Dorsolateral prefrontal cortex (tissue), 120 donors: ENCODE measurements at regions of chr3 and their contacts with region 1.

Region 1: GRCh38 chr3:160754855-160755747 is 930 bp upstream of the PPM1L start:
- DNase-seq: peak; percentile 78 to 96 (median 93)
- H3K4me3 ChIP-seq: peak overlapping the region; percentile 69 to 98 (median 85)
- H3K27ac ChIP-seq: peak overlapping the region; percentile 76 to 99 (median 96)
- H3K27me3 ChIP-seq: no peaks in the 10 kb centered on the region
- CTCF ChIP-seq: peak in 17 of 56 donors; percentile 0 to 30 (median 11)

Region 2: GRCh38 chr3:160450846-160451245 is 304.3 kb before region 1 on chr3:
- intact Hi-C with region 1: no loop called
- DNase-seq: no peak
- H3K4me3 ChIP-seq: no peak overlapping the region
- H3K27ac ChIP-seq: peak overlapping the region in 28 of 59 donors; percentile 8 to 93 (median 88)
- H3K27me3 ChIP-seq: peaks cover 0 to 47% (median 24%) of the 10 kb centered on the region in 45 donors
- CTCF ChIP-seq: no peak

Region 3: GRCh38 chr3:160565442-160566403 is 189.4 kb before region 1 on chr3 and contains the start of gene KPNA4:
- intact Hi-C with region 1: loop called (anchors 2 kb)
- DNase-seq: peak; percentile 92 to 98 (median 96)
- H3K4me3 ChIP-seq: peak within 1 kb of the TSS; percentile 68 to 96 (median 85)
- H3K27ac ChIP-seq: peak within 1 kb of the TSS; percentile 66 to 98 (median 90)
- H3K27me3 ChIP-seq: no peaks in the 10 kb centered on the region
- CTCF ChIP-seq: peak in 14 of 56 donors; percentile 3 to 38 (median 20)
- total RNA-seq, gene KPNA4: 39.4 to 90.3 (median 59.5) TPM

Region 4: DNA sequence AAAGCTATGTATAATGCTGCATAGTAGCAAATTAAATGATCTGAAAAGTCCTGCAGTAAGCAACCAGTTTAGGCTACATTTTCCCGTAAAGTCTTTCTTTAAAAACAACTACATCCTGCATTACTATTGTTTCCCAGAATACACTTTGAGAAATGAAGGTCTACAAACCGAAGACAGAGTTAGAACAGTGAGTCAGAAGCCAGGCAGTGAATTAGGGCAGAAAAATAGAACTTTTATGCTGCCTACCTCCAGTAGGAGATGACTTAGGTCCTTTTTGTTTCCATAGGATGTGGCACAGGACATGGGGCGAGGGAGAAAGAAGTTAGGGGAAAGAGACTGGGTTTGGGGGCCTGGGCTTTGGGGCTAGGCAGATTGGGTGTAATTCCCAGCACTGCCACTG is 128.3 kb after region 1 on chr3:
- intact Hi-C with region 1: loop called in 1 of 2 experiments (anchors 5 kb)
- DNase-seq: no peak
- H3K4me3 ChIP-seq: no peak overlapping the region
- H3K27ac ChIP-seq: peak overlapping the region in 1 of 59 donors; percentile 21
- H3K27me3 ChIP-seq: no peaks in the 10 kb centered on the region
- CTCF ChIP-seq: peak in 1 of 56 donors; percentile 9

Region 5: GRCh38 chr3:160929595-160929994 is 174.5 kb after region 1 on chr3:
- intact Hi-C with region 1: loop called in 1 of 2 experiments (anchors 5 kb)
- DNase-seq: peak in 4 of 10 donors; percentile 36 to 47 (median 46)
- H3K4me3 ChIP-seq: no peak overlapping the region
- H3K27ac ChIP-seq: no peak overlapping the region
- H3K27me3 ChIP-seq: no peaks in the 10 kb centered on the region
- CTCF ChIP-seq: peak in 33 of 56 donors; percentile 7 to 45 (median 28)

Region 6: DNA sequence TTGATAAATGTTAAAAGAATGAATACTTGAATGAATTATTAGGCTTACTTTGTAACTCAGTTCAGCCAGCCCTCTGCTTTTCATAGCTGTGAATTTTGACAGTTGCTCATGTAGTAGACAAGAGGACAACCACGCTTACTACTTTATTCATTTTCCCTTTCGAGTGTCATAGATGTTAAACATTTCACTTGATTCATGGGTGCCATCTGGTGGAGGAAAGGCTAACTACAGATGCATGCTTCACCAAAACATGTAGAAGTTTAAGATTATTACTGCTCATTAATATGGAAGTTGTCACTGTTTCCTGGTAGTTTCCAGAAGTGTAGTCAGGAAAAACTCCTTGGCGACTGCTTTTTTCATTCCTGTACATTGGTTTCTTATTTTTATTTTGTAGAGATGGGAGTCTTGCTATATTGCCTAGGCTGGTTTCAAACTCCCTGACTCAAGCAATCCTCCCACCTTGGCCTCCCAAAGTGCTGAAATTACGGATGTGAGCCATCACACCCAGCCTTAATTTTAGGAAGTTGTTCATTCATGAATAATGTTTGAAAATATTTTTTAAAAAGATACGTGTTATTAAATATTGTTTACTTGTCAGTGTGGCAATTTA is 186.9 kb after region 1 on chr3:
- intact Hi-C with region 1: loop called (anchors 5 kb)
- DNase-seq: peak in 6 of 10 donors; percentile 37 to 88 (median 68)
- H3K4me3 ChIP-seq: peak overlapping the region in 3 of 59 donors; percentile 1 to 25 (median 2)
- H3K27ac ChIP-seq: no peak overlapping the region
- H3K27me3 ChIP-seq: no peaks in the 10 kb centered on the region
- CTCF ChIP-seq: peak; percentile 14 to 99 (median 94)

Region 7: GRCh38 chr3:161117646-161118045 is 362.5 kb after region 1 on chr3:
- intact Hi-C with region 1: no loop called
- DNase-seq: no peak
- H3K4me3 ChIP-seq: no peak overlapping the region
- H3K27ac ChIP-seq: no peak overlapping the region
- H3K27me3 ChIP-seq: no peaks in the 10 kb centered on the region
- CTCF ChIP-seq: no peak

Region 8: DNA sequence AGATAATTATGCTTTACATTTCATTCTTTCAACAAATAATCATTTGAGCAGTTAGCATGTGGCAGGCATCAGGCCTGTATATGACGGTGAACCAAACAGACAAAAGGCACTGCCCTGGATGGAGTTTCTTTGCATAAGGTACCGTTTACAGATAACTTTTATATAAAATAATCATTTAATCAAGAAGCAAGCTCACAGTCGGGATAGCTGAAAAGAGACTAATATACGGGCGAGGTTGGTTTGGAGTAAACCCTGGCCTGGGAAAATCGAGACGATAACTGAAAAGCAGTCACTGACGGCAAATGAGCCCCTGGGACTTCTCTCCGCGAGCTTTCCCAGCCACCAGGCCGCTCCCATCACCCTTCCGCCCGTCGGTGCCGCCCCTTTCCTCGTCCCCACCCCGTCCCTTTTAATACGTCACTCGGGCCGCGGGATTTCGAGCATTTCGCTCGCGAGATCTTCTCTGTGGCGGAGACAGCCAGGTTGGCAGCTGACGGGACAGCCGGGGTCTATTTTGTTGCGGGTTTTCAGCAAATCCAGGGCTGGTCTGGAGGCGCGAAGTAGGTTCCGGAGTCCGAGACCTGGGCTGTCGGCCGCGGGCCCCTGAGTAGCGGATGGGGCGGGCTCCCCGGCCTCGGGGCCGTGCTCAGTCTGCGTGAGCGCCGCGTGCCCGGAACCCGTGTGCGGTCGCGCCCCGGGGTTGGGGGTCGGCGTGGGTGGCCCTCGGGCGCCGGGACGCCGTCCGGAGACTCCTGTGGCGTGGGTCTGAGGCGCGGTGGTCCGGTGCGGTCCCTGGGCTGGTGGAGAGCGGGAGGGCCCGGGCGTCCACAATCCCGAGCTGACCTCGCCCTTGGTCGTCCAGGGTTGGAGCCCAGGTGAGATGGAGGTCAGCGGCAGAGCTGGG is 466.0 kb after region 1 on chr3 and contains the start of gene NMD3:
- intact Hi-C with region 1: loop called in 1 of 2 experiments (anchors 5 kb)
- DNase-seq: peak; percentile 77 to 96 (median 94)
- H3K4me3 ChIP-seq: peak within 1 kb of the TSS; percentile 64 to 99 (median 93)
- H3K27ac ChIP-seq: peak within 1 kb of the TSS; percentile 20 to 97 (median 87)
- H3K27me3 ChIP-seq: no peaks in the 10 kb centered on the region
- CTCF ChIP-seq: peak in 12 of 56 donors; percentile 8 to 33 (median 20)
- total RNA-seq, gene NMD3: 32.8 to 69.9 (median 50.7) TPM